ENCODE measurements at regions of chrX and their contacts with region 1.

Region 1: DNA sequence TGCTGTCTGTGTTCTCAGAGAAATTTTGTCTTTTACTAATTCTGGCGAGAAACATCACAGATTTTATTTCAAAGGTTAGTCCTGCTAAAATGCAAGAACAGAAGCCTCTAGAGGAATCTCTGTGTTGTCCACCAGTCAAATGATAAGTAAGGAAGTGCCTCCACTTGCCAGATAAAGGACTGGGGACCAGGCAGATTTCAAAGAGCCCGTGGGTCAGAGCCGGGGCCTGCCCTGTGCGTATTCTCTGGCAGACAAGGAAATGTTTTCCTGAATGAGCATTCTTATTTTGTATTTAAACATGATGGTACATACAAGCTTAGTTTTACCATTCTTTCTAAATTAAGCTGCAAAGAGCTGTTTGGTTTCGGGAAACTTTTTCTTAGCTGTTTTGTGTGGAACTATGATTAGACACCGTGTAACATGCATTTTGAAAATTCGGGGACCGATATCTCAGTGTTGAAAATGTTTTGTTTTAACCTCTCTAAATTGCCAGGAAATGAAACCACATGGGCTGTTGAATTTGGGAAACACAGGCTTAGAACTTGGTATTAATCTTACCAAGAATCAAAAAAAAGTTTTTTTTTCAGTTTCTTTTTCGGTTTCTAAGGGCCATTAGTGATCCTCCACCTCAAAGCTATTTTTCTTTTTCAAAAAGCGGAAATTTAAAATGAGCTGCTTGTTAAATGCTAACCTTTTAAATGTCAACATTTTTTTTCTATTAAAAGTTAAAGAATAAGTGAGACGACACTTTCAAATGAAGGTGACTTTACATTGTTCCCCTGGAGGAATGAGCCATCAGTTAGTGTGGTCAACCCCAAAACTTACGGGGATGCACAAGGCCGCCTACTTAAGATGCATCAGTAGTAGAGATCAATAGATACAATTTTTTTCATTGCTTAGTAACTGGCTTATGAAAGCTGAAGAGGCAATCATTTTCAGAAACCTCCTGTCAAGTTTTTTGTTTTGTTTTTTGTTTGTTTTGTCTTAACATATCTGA is 89.6 kb upstream of the MTM1 start:
- DNase-seq: peak; percentile 79
- H3K4me3 Mint-ChIP-seq: peak overlapping the region; percentile 76
- H3K27ac Mint-ChIP-seq: peak overlapping the region; percentile 89
- H3K4me1 Mint-ChIP-seq: peaks cover 52% of the 10 kb centered on the region
- H3K27me3 Mint-ChIP-seq: no peaks in the 10 kb centered on the region

Region 2: DNA sequence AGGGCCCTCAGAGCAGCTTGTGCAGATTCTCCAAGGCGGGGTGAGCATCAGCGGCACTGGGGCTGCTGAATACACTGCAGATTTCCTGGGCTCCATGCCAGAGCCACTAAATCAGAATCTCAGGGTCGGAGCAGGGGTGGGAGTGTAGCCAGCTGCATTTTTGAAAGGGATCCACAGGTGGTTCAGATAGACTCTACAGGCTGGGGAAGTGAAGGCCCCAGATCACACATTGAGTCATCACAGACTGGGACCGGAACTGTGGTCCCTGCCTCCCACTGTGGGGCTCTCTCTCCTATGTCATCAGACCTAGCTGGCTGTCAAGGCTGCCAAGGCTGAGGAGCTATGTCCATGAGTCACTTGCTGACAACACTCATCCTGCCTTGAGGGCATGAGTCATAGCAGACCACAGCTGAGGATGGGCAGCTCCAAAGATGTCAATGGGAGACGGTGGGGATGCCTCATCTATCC is 277.9 kb before region 1 on chrX:
- intact Hi-C with region 1: loop called (anchors 2 kb)
- DNase-seq: peak; percentile 77
- H3K4me3 Mint-ChIP-seq: peak overlapping the region; percentile 10
- H3K27ac Mint-ChIP-seq: peak overlapping the region; percentile 56
- H3K4me1 Mint-ChIP-seq: peaks cover 8% of the 10 kb centered on the region
- H3K27me3 Mint-ChIP-seq: no peaks in the 10 kb centered on the region

Region 3: GRCh38 chrX:150449313-150449712 is 29.5 kb before region 1 on chrX:
- intact Hi-C with region 1: no loop called
- DNase-seq: peak; percentile 53
- H3K4me3 Mint-ChIP-seq: no peak overlapping the region
- H3K27ac Mint-ChIP-seq: no peak overlapping the region
- H3K4me1 Mint-ChIP-seq: peaks cover 25% of the 10 kb centered on the region
- H3K27me3 Mint-ChIP-seq: no peaks in the 10 kb centered on the region

Measured in activated CD4-positive, alpha-beta T cell treated with anti-CD3 and anti-CD28 coated beads, Interleukin-2, amount 10 ng/mL, durations not matched to agents 24 days and 14 days (primary cell).